ENCODE measurements at regions of chr18 and their contacts with region 1.

Region 1: GRCh38 chr18:25310045-25310444 is 41.9 kb downstream of the ZNF521 start:
- DNase-seq: peak; percentile 75
- H3K4me3 ChIP-seq: no peak overlapping the region
- H3K27ac ChIP-seq: no peak overlapping the region
- H3K4me1 ChIP-seq: peaks cover 35% of the 10 kb centered on the region
- H3K27me3 ChIP-seq: no peaks in the 10 kb centered on the region
- CTCF ChIP-seq: peak in 1 of 2 donors; percentile 1
- POLR2A ChIP-seq: no peak

Region 2: DNA sequence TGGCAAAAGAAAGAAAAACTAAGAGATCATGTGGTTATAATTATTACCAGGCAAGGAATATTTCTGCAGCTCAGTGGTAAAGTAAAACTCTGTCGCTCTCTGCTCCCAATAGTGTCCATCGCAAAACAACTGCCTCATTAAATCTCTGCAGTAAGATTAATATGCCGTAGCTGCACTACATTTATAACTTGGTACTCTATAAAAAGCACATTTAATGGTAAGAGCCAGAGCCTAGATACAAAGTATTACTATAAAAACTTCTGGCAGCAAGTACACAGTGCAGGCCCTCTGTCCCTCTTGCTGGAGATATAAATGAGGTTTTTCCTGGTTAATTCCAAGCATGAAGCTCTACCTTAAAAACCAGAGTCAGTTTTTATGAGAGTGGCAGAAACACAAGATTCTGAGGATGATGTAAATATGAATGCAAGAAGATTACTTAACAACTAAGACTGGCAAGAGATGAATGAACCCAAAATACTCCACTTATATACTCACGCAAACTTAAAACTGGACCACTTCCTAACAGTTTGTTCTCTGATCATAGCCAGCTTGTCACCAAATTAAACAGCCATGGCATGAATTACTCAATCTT is 16.4 kb after region 1 on chr18:
- CTCF ChIA-PET with region 1: interaction called, 5 read pairs
- POLR2A ChIA-PET with region 1: interaction called, 3 read pairs
- dilution Hi-C with region 1: no loop called
- intact Hi-C with region 1: loop called (anchors 2 kb)
- DNase-seq: no peak
- H3K4me3 ChIP-seq: no peak overlapping the region
- H3K27ac ChIP-seq: no peak overlapping the region
- H3K4me1 ChIP-seq: peaks cover 36% of the 10 kb centered on the region
- H3K27me3 ChIP-seq: no peaks in the 10 kb centered on the region
- CTCF ChIP-seq: no peak
- POLR2A ChIP-seq: no peak